ENCODE measurements at regions of chr18 and their contacts with region 1.

Region 1: GRCh38 chr18:50429207-50429948 is 54.5 kb downstream of the SKA1 start:
- DNase-seq: peak; percentile 38
- CTCF ChIP-seq: peak; percentile 38

Region 2: DNA sequence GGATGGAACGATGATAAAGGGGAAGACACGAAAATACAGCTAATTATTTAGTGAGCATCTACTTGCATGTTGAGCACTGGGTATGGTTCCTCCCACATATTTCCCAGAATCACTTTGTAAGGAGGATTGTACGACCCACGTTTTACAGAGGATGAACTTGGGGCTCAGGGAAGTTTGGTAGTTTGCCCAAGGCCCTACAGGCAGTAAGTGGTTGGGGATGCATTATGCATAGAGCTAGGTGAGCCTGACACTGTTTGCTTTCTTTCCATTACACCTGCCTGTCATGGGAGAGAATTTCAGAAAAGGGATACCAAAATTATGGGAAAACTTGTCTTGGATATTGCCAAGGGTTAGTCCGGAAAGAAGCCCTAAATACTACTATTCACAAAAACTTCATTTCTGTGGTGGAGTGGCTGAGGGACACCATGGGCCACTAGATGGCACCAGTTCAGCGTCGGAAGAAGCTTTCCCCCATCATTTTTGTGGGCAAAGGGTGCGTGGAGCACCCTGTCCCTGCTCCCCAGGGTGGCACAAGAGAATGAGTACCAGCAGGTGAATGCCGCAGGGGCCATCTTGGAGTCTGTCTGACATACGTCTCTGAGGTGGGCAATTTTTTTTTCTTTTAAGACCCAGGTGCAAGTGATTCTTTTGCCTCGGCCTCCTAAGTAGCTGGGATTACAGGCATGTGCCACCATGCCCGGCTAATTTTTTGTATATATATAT is 918.8 kb before region 1 on chr18:
- CTCF ChIA-PET with region 1: interaction called, 10 read pairs
- POLR2A ChIA-PET with region 1: no interaction called
- DNase-seq: peak; percentile 59
- CTCF ChIP-seq: peak; percentile 80

Region 3: GRCh38 chr18:50203801-50204604 is 225.4 kb before region 1 on chr18:
- CTCF ChIA-PET with region 1: interaction called, 14 read pairs
- POLR2A ChIA-PET with region 1: no interaction called
- DNase-seq: peak; percentile 51
- CTCF ChIP-seq: peak; percentile 46

Region 4: DNA sequence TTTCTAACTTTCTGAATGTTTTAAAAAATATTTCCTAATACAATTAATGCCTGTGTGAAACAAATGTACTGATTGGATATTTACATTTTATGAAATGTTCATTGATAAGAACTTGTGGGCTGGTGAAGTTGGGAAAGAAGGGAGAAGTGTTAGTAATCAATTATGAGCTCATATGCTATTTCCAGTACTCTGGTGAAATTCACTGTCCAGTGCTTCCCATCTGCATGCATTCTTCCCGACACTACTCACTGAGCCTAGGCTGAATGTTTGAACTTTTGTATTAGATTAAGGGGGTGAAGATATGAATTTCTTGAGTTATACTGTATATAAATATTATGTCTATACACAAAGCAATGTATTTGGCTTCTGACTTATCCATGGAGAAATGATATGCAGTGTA is 18.5 kb before region 1 on chr18:
- CTCF ChIA-PET with region 1: interaction called, 13 read pairs
- POLR2A ChIA-PET with region 1: no interaction called
- DNase-seq: no peak
- CTCF ChIP-seq: no peak

Region 5: DNA sequence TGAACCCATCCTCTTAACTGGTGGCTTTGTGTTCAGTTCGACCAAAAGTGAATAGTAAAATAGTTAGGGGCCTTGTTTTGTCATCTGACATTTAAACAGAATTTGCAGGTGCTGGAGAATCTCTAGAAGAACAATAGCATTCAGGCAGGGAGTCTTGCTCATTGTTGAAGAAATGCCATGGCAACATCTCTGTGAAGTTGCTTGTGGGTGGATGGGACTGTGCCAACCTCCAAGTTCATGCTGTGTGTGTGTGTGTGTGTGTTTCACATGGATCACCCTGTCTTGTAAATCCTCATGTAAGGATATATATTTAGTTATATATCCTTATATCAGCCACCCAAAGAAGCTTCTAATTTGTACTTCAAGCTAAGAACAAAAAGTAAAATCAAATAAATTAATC is 12.1 kb after region 1 on chr18:
- CTCF ChIA-PET with region 1: interaction called, 23 read pairs
- POLR2A ChIA-PET with region 1: no interaction called
- DNase-seq: no peak
- CTCF ChIP-seq: no peak

Region 6: DNA sequence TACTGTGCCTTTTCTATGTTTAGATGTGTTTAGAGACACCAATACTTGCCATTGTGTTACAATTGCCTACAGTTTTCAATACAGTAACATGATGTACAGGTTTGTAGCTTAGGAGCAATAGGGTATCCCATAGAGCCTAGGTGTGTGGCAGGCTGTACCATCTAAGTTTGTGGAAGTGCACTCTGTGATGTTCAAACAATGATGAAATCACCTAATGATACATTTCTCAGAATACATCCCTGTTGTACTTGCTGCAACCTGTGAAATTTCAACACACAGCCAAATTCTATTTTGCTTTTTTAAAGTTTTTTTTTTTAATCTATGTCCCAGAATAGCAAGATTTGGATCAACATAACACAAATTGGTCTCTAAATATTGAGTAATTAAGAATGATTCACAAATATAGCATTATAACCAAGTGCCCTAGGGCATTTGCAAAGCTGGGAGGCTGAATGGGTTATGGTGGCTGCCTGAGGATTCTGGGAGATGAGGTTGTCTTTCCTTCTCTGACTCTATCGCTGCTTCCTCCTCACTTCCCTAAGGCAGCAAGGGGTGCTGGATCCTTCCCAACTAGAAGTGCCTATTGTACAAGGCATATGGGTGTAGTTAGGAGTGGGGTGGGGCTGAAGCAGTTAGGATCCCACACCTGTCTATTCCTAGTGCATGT is 23.8 kb after region 1 on chr18:
- CTCF ChIA-PET with region 1: interaction called, 14 read pairs
- POLR2A ChIA-PET with region 1: no interaction called
- DNase-seq: no peak
- CTCF ChIP-seq: no peak

Measured in GM10248 (cell line).